Activated CD4-positive, alpha-beta T cell treated with anti-CD3 and anti-CD28 coated beads for 36 hours (primary cell): ENCODE measurements at regions of chr1 and their contacts with region 1.

Region 1: DNA sequence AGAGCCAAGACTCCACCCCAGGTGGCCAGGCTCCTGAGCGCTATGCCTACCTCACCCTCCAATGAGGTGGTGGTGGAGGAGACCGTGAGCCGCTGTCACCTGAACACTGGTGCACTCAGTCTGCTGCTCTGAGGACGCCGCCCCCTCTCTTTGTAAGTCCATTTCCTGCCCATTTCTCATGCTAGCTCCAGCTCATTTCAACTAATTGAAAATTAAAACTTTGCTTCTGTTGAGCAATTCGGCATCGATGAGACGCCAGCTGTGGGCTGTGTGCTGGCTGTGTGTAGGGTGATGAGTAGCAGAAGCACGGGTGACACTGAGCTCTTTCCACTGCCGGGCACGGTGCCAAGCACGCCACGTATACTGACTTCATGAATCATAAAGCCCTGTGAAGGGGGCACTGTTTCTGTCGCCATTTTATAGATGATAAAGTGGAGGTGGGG is 11.2 kb downstream of the TNFRSF1B start:
- DNase-seq: peak; percentile 97
- ATAC-seq: peak; percentile 78
- H3K4me3 Mint-ChIP-seq: peak overlapping the region; percentile 63
- H3K27ac Mint-ChIP-seq: peak overlapping the region; percentile 96
- H3K4me1 Mint-ChIP-seq: peaks cover 86% of the 10 kb centered on the region
- H3K27me3 Mint-ChIP-seq: no peaks in the 10 kb centered on the region

Region 2: GRCh38 chr1:11272832-11273594 is 905.0 kb before region 1 on chr1 and contains the start of gene UBIAD1:
- CTCF ChIA-PET with region 1: no interaction called
- POLR2A ChIA-PET with region 1: no interaction called
- intact Hi-C with region 1: loop called in 1 of 2 experiments (anchors 10 kb)
- DNase-seq: peak; percentile 95
- ATAC-seq: peak; percentile 84
- H3K4me3 Mint-ChIP-seq: peak within 1 kb of the TSS; percentile 95
- H3K27ac Mint-ChIP-seq: peak within 1 kb of the TSS; percentile 91
- H3K4me1 Mint-ChIP-seq: peaks cover 29% of the 10 kb centered on the region
- H3K27me3 Mint-ChIP-seq: no peaks in the 10 kb centered on the region
- total RNA-seq, gene UBIAD1: 29.2 to 32.0 TPM

Region 3: DNA sequence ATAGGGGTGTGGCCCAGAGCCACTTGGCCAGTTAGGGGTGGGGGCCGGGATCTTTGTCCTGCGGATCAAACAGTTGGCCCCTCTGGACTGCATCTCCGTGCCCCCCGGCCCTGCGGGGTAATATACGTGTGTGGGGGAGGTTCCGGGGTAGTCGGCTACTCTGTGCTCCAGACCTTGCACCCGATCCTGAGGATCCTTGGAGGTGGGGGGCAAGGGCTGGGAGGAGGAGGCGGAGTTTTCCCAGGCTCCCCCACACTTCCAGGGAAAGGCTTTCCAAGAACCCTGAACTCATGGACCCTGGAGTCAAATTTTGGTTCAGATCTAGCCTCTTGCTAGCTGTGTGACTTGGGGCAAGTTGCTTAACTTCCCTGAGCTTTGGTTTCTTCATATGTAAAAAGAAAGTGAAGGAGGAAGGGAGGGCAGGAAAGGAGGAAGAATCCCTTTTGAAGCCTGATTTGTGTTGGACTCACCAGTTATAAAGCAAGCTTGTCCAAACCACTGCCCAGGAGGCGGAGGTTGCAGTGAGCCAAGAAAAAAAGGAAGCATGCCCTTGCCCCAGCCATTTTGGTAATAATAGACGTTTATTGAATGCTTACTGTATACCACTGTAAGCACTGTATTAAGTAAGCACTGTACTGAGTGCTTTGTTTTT is 158.0 kb before region 1 on chr1:
- CTCF ChIA-PET with region 1: no interaction called
- POLR2A ChIA-PET with region 1: interaction called, 4 read pairs
- intact Hi-C with region 1: loop called in 1 of 2 experiments (anchors 1 kb)
- DNase-seq: no peak
- ATAC-seq: no peak
- H3K4me3 Mint-ChIP-seq: peak overlapping the region; percentile 83
- H3K27ac Mint-ChIP-seq: peak overlapping the region; percentile 74
- H3K4me1 Mint-ChIP-seq: peaks cover 2% of the 10 kb centered on the region
- H3K27me3 Mint-ChIP-seq: no peaks in the 10 kb centered on the region

Region 4: DNA sequence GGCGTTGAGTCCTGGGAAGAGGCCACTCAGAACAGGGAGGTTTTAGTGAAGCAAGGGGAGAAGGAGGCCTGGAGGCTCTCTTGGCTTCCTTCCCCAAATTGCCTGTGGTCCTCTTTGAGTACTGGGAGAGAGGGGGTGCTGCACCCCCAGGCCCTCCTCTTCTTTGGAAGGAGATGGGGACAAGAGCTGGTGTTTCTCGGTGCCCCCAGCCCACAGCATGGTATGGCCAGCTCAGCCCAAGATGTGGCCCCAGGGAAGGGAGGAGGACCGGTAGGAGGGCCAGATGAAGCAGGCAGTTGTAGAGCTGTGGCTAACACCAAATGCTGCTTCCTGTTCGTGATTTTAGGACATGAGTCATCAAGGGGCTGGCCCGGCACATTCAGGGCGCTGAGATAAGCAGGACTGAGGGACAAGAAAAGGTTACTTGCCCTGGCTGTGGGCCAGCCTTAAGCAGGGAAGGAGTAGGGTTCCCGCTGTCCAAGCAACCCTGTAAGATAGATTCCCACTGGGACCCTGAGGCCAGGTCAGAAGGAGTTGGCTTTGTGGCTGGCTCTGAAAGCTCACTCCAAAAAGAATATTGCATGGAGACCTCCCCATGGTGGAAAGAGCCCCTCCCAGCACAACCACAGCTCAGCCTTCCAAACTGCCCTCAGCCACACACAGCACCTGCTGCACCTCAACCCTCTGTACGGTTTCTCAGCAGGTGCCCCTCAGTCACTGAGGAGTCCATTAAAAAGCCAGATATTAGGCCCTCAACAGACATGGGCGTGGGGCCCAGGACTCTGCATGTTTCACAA is 16.2 kb before region 1 on chr1:
- CTCF ChIA-PET with region 1: interaction called, 11 read pairs
- POLR2A ChIA-PET with region 1: interaction called, 26 read pairs
- intact Hi-C with region 1: loop called (anchors 1 kb)
- DNase-seq: peak; percentile 89
- ATAC-seq: peak; percentile 84
- H3K4me3 Mint-ChIP-seq: peak overlapping the region; percentile 15
- H3K27ac Mint-ChIP-seq: peak overlapping the region; percentile 91
- H3K4me1 Mint-ChIP-seq: peaks cover 73% of the 10 kb centered on the region
- H3K27me3 Mint-ChIP-seq: no peaks in the 10 kb centered on the region

Region 5: DNA sequence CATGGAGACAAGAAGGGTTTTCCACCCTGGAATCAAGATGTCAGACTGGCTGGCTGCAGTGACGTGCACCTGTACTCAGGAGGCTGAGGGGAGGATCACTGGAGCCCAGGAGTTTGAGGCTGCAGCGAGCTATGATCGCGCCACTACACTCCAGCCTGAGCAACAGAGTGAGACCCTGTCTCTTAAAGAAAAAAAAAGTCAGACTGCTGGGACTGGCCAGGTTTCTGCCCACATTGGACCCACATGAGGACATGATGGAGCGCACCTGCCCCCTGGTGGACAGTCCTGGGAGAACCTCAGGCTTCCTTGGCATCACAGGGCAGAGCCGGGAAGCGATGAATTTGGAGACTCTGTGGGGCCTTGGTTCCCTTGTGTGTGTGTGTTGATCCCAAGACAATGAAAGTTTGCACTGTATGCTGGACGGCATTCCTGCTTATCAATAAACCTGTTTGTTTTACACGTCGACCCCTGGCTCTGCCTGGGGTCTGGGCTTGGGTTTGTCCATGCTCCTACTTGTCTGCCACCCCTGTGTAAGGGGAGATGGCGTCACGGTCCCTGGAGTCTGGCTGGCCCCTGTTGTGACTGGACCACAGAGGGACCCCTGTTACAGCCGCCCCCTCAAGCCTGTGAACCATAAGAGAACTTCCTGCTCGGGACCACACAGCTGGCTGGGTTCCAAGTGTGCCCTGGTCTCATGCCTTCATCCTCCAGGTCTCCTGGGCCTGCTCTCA is 30.9 kb after region 1 on chr1:
- CTCF ChIA-PET with region 1: interaction called, 10 read pairs
- POLR2A ChIA-PET with region 1: interaction called, 3 read pairs
- intact Hi-C with region 1: loop called in 1 of 2 experiments (anchors 2 kb)
- DNase-seq: peak; percentile 93
- ATAC-seq: peak; percentile 68
- H3K4me3 Mint-ChIP-seq: no peak overlapping the region
- H3K27ac Mint-ChIP-seq: peak overlapping the region; percentile 17
- H3K4me1 Mint-ChIP-seq: peaks cover 47% of the 10 kb centered on the region
- H3K27me3 Mint-ChIP-seq: no peaks in the 10 kb centered on the region

Region 6: GRCh38 chr1:12511516-12512468 is 333.8 kb after region 1 on chr1:
- CTCF ChIA-PET with region 1: no interaction called
- POLR2A ChIA-PET with region 1: no interaction called
- intact Hi-C with region 1: loop called in 1 of 2 experiments (anchors 5 kb)
- DNase-seq: no peak
- ATAC-seq: no peak
- H3K4me3 Mint-ChIP-seq: peak overlapping the region; percentile 58
- H3K27ac Mint-ChIP-seq: peak overlapping the region; percentile 99
- H3K4me1 Mint-ChIP-seq: peaks cover 54% of the 10 kb centered on the region
- H3K27me3 Mint-ChIP-seq: no peaks in the 10 kb centered on the region